ENCODE measurements at regions of chr3 and their contacts with region 1.

Region 1: DNA sequence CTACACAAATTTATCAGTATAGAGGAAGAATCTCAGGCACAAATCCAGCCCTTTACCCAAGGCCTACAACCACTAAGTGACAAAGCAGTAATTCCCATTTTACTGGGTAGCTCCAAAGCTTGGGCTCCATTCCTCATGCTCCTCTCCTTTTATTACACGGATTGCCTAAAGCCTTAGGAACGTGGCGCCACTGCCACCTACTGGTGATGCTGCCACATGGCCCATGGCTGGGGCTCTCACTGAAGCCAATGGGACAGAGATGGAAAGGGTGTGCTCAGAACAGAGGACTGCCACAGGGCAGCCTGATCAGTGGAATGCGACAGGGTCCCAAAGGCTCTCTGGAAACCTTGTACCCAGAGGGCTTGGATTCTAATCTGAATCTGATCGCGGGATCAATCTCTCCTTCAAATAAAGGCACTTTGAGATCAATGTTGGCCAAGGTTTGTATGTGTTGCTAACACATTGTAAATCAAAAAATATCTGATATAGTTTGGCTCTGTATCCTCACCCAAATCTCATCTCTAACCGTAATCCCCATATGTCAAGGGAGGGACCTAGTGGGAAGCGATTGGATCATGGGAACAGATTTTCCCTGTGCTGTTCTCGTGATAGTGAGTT is 33.5 kb upstream of the LYZL4 start:
- DNase-seq: peak; percentile 73
- ATAC-seq: peak; percentile 80
- H3K4me3 ChIP-seq: no peak overlapping the region
- H3K4me3 Mint-ChIP-seq: no peak overlapping the region
- H3K27ac ChIP-seq: no peak overlapping the region
- H3K27ac Mint-ChIP-seq: no peak overlapping the region
- H3K4me1 ChIP-seq: no peaks in the 10 kb centered on the region
- H3K4me1 Mint-ChIP-seq: no peaks in the 10 kb centered on the region
- H3K27me3 ChIP-seq: peaks cover 0 to 6% (median 5%) of the 10 kb centered on the region in 4 experiments
- H3K27me3 Mint-ChIP-seq: peaks cover 13% of the 10 kb centered on the region
- CTCF ChIP-seq: peak; percentile 95

Region 2: GRCh38 chr3:42118762-42119361 is 325.1 kb before region 1 on chr3:
- CTCF ChIA-PET with region 1: interaction called, 5 read pairs
- POLR2A ChIA-PET with region 1: no interaction called
- intact Hi-C with region 1: loop called (anchors 5 kb)
- DNase-seq: peak; percentile 46
- ATAC-seq: no peak
- H3K4me3 ChIP-seq: no peak overlapping the region
- H3K4me3 Mint-ChIP-seq: no peak overlapping the region
- H3K27ac ChIP-seq: peak overlapping the region in 1 of 2 donors; percentile 47
- H3K27ac Mint-ChIP-seq: peak overlapping the region; percentile 59
- H3K4me1 ChIP-seq: peaks cover 51 to 63% of the 10 kb centered on the region in 2 donors
- H3K4me1 Mint-ChIP-seq: peaks cover 86% of the 10 kb centered on the region
- H3K27me3 ChIP-seq: no peaks in the 10 kb centered on the region
- H3K27me3 Mint-ChIP-seq: no peaks in the 10 kb centered on the region
- CTCF ChIP-seq: no peak

Region 3: DNA sequence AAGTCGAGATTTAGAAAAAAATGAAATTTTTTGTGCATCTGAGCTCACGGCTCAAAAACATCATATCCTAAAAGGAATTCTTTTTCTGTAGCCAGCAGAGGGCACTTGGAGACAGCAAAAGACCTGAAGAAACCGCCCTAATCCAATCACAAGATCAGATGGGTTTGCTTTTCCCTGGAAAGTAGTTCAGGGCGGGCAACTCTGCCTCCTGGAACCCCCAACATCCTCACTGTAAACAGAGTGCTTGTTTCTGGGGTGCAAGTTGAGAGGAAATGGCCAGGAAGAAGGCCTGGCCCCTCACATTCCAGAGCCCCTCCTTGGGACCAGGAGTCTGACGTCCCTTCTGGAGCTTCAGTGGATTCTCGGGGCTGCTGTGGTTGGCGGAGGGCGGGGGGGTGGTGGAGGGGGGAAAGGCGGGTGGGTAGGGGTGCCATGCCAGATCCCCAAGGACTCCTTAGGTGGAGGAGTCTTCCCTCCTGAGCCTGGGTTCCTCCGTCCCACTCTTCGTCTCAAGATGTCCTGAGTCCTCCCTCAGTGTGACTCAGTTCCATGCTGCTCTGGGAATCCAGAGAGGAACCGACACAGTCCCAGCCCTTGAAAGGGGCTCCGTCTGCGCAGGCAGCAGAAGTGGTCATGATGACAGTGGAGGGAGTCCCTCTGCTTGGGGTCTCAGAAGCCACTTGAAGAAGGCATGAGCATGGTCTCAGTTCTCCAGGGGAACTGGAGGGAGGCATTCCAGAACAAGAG is 213.8 kb before region 1 on chr3:
- CTCF ChIA-PET with region 1: interaction called, 13 read pairs
- POLR2A ChIA-PET with region 1: no interaction called
- intact Hi-C with region 1: no loop called
- DNase-seq: no peak
- ATAC-seq: no peak
- H3K4me3 ChIP-seq: no peak overlapping the region
- H3K4me3 Mint-ChIP-seq: no peak overlapping the region
- H3K27ac ChIP-seq: no peak overlapping the region
- H3K27ac Mint-ChIP-seq: no peak overlapping the region
- H3K4me1 ChIP-seq: no peaks in the 10 kb centered on the region
- H3K4me1 Mint-ChIP-seq: no peaks in the 10 kb centered on the region
- H3K27me3 ChIP-seq: peaks cover 0 to 7% (median under 1%) of the 10 kb centered on the region in 4 experiments
- H3K27me3 Mint-ChIP-seq: peaks cover 11% of the 10 kb centered on the region
- CTCF ChIP-seq: no peak

Region 4: DNA sequence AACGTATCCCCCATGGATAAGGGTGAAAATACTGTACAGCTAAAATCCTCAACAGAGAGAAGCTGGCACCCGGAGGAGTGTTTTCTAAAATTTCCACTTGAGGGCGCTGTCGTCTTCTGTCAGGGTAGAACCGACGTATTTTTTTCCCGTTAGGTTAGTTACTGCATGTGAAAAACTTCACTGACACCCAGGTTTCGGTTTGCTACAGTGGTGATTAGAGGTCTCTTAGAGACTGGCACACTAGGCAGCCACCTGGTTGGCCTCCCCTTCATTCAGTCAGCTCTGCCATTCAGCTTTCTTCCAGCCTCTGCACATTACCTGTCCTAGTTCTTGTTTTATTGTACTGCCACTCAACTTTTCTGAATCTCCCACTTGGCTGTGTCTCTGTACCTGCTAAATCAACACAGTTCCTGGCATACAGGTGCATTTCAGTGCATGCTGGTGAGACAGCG is 196.3 kb before region 1 on chr3:
- CTCF ChIA-PET with region 1: interaction called, 28 read pairs
- POLR2A ChIA-PET with region 1: no interaction called
- intact Hi-C with region 1: loop called (anchors 1 kb)
- DNase-seq: peak; percentile 69
- ATAC-seq: peak; percentile 45
- H3K4me3 ChIP-seq: no peak overlapping the region
- H3K4me3 Mint-ChIP-seq: no peak overlapping the region
- H3K27ac ChIP-seq: no peak overlapping the region
- H3K27ac Mint-ChIP-seq: no peak overlapping the region
- H3K4me1 ChIP-seq: peaks cover 4 to 6% of the 10 kb centered on the region in 2 donors
- H3K4me1 Mint-ChIP-seq: peaks cover 7% of the 10 kb centered on the region
- H3K27me3 ChIP-seq: peaks cover 0 to 8% (median 0%) of the 10 kb centered on the region in 4 experiments
- H3K27me3 Mint-ChIP-seq: peaks cover 22% of the 10 kb centered on the region
- CTCF ChIP-seq: peak; percentile 83

Region 5: DNA sequence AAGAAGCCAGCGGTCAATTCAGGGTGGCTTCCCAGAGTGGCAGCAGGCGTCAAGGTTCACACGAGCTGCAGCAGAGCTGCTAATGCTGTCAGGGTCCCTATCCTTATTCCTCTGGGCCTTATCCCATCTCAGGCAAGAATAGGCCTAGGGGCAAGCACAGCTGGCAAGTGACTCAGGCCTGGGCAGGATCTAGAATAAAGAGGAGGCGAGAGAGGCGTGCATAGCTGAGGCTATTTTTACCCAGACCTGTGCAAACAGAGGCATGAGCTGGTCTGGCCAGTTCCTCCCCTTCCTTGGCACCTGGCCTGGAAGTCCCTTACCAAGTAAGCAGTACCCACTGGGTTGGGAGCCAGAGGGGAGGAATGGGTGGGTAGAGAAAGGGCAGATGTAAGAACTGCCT is 46.3 kb after region 1 on chr3:
- CTCF ChIA-PET with region 1: interaction called, 4 read pairs
- POLR2A ChIA-PET with region 1: no interaction called
- intact Hi-C with region 1: loop called (anchors 2 kb)
- DNase-seq: peak; percentile 55
- ATAC-seq: peak; percentile 92
- H3K4me3 ChIP-seq: no peak overlapping the region
- H3K4me3 Mint-ChIP-seq: peak overlapping the region; percentile 81
- H3K27ac ChIP-seq: peak overlapping the region; percentile 49
- H3K27ac Mint-ChIP-seq: peak overlapping the region; percentile 94
- H3K4me1 ChIP-seq: peaks cover 36 to 49% of the 10 kb centered on the region in 2 donors
- H3K4me1 Mint-ChIP-seq: peaks cover 52% of the 10 kb centered on the region
- H3K27me3 ChIP-seq: no peaks in the 10 kb centered on the region
- H3K27me3 Mint-ChIP-seq: no peaks in the 10 kb centered on the region
- CTCF ChIP-seq: no peak

Measured in B cell (primary cell).